PC-3 (cell line): ENCODE measurements at regions of chr4 and their contacts with region 1.

Region 1: GRCh38 chr4:54427826-54428225 is 198.7 kb downstream of the PDGFRA start:
- DNase-seq: no peak
- ATAC-seq: no peak
- H3K4me3 ChIP-seq: no peak overlapping the region
- H3K27ac ChIP-seq: no peak overlapping the region
- H3K4me1 ChIP-seq: no peaks in the 10 kb centered on the region
- H3K27me3 ChIP-seq: peaks cover 83% of the 10 kb centered on the region
- CTCF ChIP-seq: no peak

Region 2: GRCh38 chr4:54238389-54238788 is 189.4 kb before region 1 on chr4:
- CTCF ChIA-PET with region 1: no interaction called
- POLR2A ChIA-PET with region 1: no interaction called
- intact Hi-C with region 1: no loop called
- DNase-seq: peak; percentile 52
- ATAC-seq: no peak
- H3K4me3 ChIP-seq: no peak overlapping the region
- H3K27ac ChIP-seq: no peak overlapping the region
- H3K4me1 ChIP-seq: peaks cover 10% of the 10 kb centered on the region
- H3K27me3 ChIP-seq: no peaks in the 10 kb centered on the region
- CTCF ChIP-seq: no peak

Region 3: GRCh38 chr4:54337009-54337408 is 90.8 kb before region 1 on chr4:
- CTCF ChIA-PET with region 1: interaction called, 3 read pairs
- POLR2A ChIA-PET with region 1: interaction called, 12 read pairs
- intact Hi-C with region 1: no loop called
- DNase-seq: no peak
- ATAC-seq: no peak
- H3K4me3 ChIP-seq: no peak overlapping the region
- H3K27ac ChIP-seq: no peak overlapping the region
- H3K4me1 ChIP-seq: no peaks in the 10 kb centered on the region
- H3K27me3 ChIP-seq: peaks cover 82% of the 10 kb centered on the region
- CTCF ChIP-seq: no peak